Activated CD8-positive, alpha-beta T cell treated with anti-CD3 and anti-CD28 coated beads, Interleukin-2, amount 10 ng/mL, durations not matched to agents 7 days and 5 days (primary cell): ENCODE measurements at regions of chr6 and their contacts with region 1.

Region 1: GRCh38 chr6:27157459-27158315 is 89.8 kb upstream of the PRSS16 start:
- DNase-seq: peak; percentile 87
- ATAC-seq: peak; percentile 79
- H3K4me3 Mint-ChIP-seq: peak overlapping the region; percentile 80
- H3K27ac Mint-ChIP-seq: peak overlapping the region; percentile 75
- H3K4me1 Mint-ChIP-seq: peaks cover 53% of the 10 kb centered on the region
- H3K27me3 Mint-ChIP-seq: no peaks in the 10 kb centered on the region

Region 2: DNA sequence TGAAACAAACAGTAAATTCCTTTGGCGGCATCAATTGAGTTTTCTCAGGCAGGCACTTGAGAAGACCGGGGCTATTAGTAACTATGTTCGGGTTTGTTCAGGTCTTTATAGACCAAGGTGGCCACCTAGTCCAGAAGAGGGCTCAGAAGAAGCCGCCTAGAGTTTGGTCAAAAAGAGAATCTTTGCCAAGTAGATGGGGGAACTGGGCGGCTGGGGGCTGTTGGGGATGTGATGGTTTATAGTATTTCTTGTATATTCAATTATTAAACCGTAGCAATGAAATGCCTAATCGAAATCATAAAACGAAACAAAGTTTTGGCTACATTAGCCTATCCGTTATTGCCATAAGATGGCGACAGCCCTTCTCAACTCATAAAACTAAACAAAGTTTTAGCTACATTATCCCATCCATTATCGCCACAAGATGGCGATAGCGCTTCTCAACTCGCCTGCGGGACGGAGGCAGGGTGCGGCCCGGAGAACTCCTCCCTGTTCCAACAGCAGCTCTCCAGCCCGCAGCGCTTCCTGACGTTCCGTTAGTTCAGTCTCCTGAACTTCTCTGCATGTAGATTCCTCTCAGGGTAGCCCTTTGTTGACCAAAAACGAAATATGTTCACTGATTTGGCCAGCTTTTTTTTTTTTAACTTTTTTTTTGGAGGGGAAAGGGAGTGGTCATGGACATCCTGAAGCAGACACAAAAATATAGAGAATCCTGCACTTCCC is 30.7 kb before region 1 on chr6:
- CTCF ChIA-PET with region 1: interaction called, 31 read pairs
- POLR2A ChIA-PET with region 1: interaction called, 1,009 read pairs
- DNase-seq: peak; percentile 92
- ATAC-seq: peak; percentile 67
- H3K4me3 Mint-ChIP-seq: peak overlapping the region; percentile 81
- H3K27ac Mint-ChIP-seq: peak overlapping the region; percentile 88
- H3K4me1 Mint-ChIP-seq: peaks cover 54% of the 10 kb centered on the region
- H3K27me3 Mint-ChIP-seq: no peaks in the 10 kb centered on the region